GM12878 (cell line): ENCODE measurements at regions of chr17 and their contacts with region 1.

Region 1: GRCh38 chr17:57243171-57243948 is 13.0 kb upstream of the MSI2 start:
- DNase-seq: peak; percentile 50
- ATAC-seq: peak; percentile 93
- H3K4me3 ChIP-seq: no peak overlapping the region
- H3K27ac ChIP-seq: no peak overlapping the region
- H3K4me1 ChIP-seq: no peaks in the 10 kb centered on the region
- H3K27me3 ChIP-seq: no peaks in the 10 kb centered on the region
- CTCF ChIP-seq: peak; percentile 100; a peak in 5 of 6 replicates
- EP300 ChIP-seq: no peak
- POLR2A ChIP-seq: no peak
- RAD21 ChIP-seq: peak; percentile 97

Region 2: DNA sequence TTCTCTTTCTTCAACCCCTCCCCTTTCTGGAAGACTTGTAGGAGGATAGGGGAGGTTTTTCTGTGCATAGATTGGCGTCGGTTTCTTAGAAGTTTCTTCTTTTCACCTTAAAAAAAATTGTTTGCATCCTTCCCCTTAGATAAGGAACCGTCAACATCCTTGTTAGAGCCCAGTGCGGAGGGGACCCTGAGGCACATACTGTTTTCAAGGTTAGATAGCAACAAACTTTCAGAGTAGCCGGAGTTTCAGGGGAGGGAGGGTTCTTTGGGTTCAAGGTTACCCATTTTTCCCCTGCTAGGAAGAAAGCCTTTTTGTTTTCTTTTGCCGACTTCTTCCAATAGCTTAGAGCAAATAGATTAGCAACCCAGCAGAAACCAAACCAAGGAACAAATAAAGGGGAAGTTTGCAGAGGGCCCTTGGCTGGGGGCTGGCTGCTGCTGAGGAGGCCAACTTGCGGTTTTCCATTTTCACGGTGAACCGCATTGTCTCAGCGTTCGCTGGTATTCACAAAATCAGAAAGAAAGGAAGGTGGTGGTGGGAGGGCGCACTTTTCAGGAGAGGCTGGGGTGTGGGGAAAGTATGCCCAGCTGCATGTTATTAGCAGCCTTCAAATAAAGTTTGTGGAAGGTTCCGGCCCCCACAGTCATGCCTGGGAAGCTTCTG is 41.8 kb after region 1 on chr17:
- CTCF ChIA-PET with region 1: interaction called, 20 read pairs
- POLR2A ChIA-PET with region 1: no interaction called
- RAD21 ChIA-PET with region 1: interaction called, 16 read pairs
- SMC1A ChIA-PET with region 1: interaction called, 13 read pairs
- in situ Hi-C with region 1: no loop called
- intact Hi-C with region 1: no loop called
- DNase-seq: peak; percentile 50
- ATAC-seq: peak; percentile 92
- H3K4me3 ChIP-seq: peak overlapping the region; percentile 62
- H3K27ac ChIP-seq: peak overlapping the region; percentile 63
- H3K4me1 ChIP-seq: peaks cover 16% of the 10 kb centered on the region
- H3K27me3 ChIP-seq: no peaks in the 10 kb centered on the region
- CTCF ChIP-seq: 0 out of 6 replicates have a peak, but pooled peaks of 1 of the 3 experiments have one; percentile 7
- EP300 ChIP-seq: peak; percentile 26 to 42; a peak in 1 of 4 replicates
- POLR2A ChIP-seq: no peak
- RAD21 ChIP-seq: peak; percentile 18; the same call in 1 of the 2 replicates

Region 3: GRCh38 chr17:57401556-57402488 is 158.5 kb after region 1 on chr17:
- CTCF ChIA-PET with region 1: interaction called, 150 read pairs
- POLR2A ChIA-PET with region 1: interaction called, 3 read pairs
- RAD21 ChIA-PET with region 1: interaction called, 71 read pairs
- SMC1A ChIA-PET with region 1: interaction called, 30 read pairs
- in situ Hi-C with region 1: no loop called
- intact Hi-C with region 1: loop called (anchors 2 kb)
- DNase-seq: no peak
- ATAC-seq: peak; percentile 38; the same call in 2 of the 3 replicates
- H3K4me3 ChIP-seq: no peak overlapping the region
- H3K27ac ChIP-seq: no peak overlapping the region
- H3K4me1 ChIP-seq: no peaks in the 10 kb centered on the region
- H3K27me3 ChIP-seq: no peaks in the 10 kb centered on the region
- CTCF ChIP-seq: peak; percentile 18 to 26 (median 20); a peak in 3 of 6 replicates
- EP300 ChIP-seq: no peak
- POLR2A ChIP-seq: no peak
- RAD21 ChIP-seq: peak; percentile 51

Region 4: GRCh38 chr17:57455063-57455914 is 211.9 kb after region 1 on chr17:
- CTCF ChIA-PET with region 1: interaction called, 25 read pairs
- POLR2A ChIA-PET with region 1: no interaction called
- RAD21 ChIA-PET with region 1: interaction called, 24 read pairs
- SMC1A ChIA-PET with region 1: interaction called, 18 read pairs
- in situ Hi-C with region 1: no loop called
- intact Hi-C with region 1: no loop called
- DNase-seq: peak; percentile 94
- ATAC-seq: peak; percentile 91
- H3K4me3 ChIP-seq: no peak overlapping the region
- H3K27ac ChIP-seq: peak overlapping the region; percentile 98
- H3K4me1 ChIP-seq: peaks cover 73% of the 10 kb centered on the region
- H3K27me3 ChIP-seq: no peaks in the 10 kb centered on the region
- CTCF ChIP-seq: no peak
- EP300 ChIP-seq: peak; percentile 95 to 99
- POLR2A ChIP-seq: peak; percentile 59
- RAD21 ChIP-seq: peak; percentile 35

Region 5: GRCh38 chr17:57552114-57552624 is 308.8 kb after region 1 on chr17:
- CTCF ChIA-PET with region 1: interaction called, 25 read pairs
- POLR2A ChIA-PET with region 1: no interaction called
- RAD21 ChIA-PET with region 1: interaction called, 11 read pairs
- SMC1A ChIA-PET with region 1: interaction called, 14 read pairs
- in situ Hi-C with region 1: no loop called
- intact Hi-C with region 1: no loop called
- DNase-seq: no peak
- ATAC-seq: peak; percentile 91
- H3K4me3 ChIP-seq: no peak overlapping the region
- H3K27ac ChIP-seq: peak overlapping the region; percentile 89
- H3K4me1 ChIP-seq: peaks cover 34% of the 10 kb centered on the region
- H3K27me3 ChIP-seq: no peaks in the 10 kb centered on the region
- CTCF ChIP-seq: peak; percentile 59 to 84 (median 77)
- EP300 ChIP-seq: no peak
- POLR2A ChIP-seq: peak; percentile 35; the same call in 1 of the 2 replicates
- RAD21 ChIP-seq: peak; percentile 64

Region 6: GRCh38 chr17:57783106-57783742 is 539.9 kb after region 1 on chr17:
- CTCF ChIA-PET with region 1: interaction called, 14 read pairs
- POLR2A ChIA-PET with region 1: no interaction called
- RAD21 ChIA-PET with region 1: interaction called, 7 read pairs
- SMC1A ChIA-PET with region 1: interaction called, 4 read pairs
- in situ Hi-C with region 1: no loop called
- intact Hi-C with region 1: no loop called
- DNase-seq: no peak
- ATAC-seq: peak; percentile 95
- H3K4me3 ChIP-seq: no peak overlapping the region
- H3K27ac ChIP-seq: no peak overlapping the region
- H3K4me1 ChIP-seq: no peaks in the 10 kb centered on the region
- H3K27me3 ChIP-seq: peaks cover 1 to 2% of the 10 kb centered on the region in 2 experiments; a peak in 2 of 4 replicates
- CTCF ChIP-seq: peak; percentile 64 to 87 (median 78)
- EP300 ChIP-seq: no peak
- POLR2A ChIP-seq: no peak
- RAD21 ChIP-seq: peak; percentile 67